Naive thymus-derived CD4-positive, alpha-beta T cell (primary cell): ENCODE measurements at regions of chr11 and their contacts with region 1.

Region 1: GRCh38 chr11:83292709-83293456 is 6.7 kb upstream of the CCDC90B start:
- DNase-seq: peak in 6 of 9 donors; percentile 23 to 41 (median 31)
- ATAC-seq: peak; percentile 85
- H3K4me3 ChIP-seq: no peak overlapping the region
- H3K4me3 Mint-ChIP-seq: peak overlapping the region in 8 of 10 donors; percentile 24 to 80 (median 63)
- H3K27ac ChIP-seq: no peak overlapping the region
- H3K27ac Mint-ChIP-seq: no peak overlapping the region
- H3K4me1 ChIP-seq: no peaks in the 10 kb centered on the region
- H3K4me1 Mint-ChIP-seq: peaks cover 2 to 6% (median 4%) of the 10 kb centered on the region in 7 donors
- H3K27me3 ChIP-seq: no peaks in the 10 kb centered on the region
- H3K27me3 Mint-ChIP-seq: peaks cover 0 to 29% (median 4%) of the 10 kb centered on the region in 5 donors

Region 2: DNA sequence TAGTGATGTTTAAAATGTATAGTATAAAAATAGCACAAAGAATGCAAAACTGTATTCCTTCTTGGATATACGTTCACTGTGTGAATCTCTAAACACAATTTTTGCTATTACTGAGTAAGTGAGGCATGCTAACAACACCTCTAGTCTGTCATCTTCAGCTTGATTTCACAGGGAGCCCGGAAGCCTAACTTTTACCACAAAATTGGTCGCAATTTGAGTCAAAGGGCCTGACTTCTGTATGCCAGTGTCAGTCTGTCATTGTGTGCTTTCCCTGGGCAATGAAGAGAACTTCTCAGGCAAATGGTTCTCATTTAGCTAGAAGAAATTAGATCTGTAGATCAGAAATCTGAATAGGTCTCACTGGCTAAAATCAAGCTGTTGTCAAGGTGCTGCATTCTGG is 1618.7 kb before region 1 on chr11:
- CTCF ChIA-PET with region 1: no interaction called
- POLR2A ChIA-PET with region 1: no interaction called
- intact Hi-C with region 1: no loop called
- DNase-seq: no peak
- ATAC-seq: no peak
- H3K4me3 ChIP-seq: no peak overlapping the region
- H3K4me3 Mint-ChIP-seq: no peak overlapping the region
- H3K27ac ChIP-seq: no peak overlapping the region
- H3K27ac Mint-ChIP-seq: no peak overlapping the region
- H3K4me1 ChIP-seq: no peaks in the 10 kb centered on the region
- H3K4me1 Mint-ChIP-seq: peaks cover 0 to 2% (median 0%) of the 10 kb centered on the region in 7 donors
- H3K27me3 ChIP-seq: no peaks in the 10 kb centered on the region
- H3K27me3 Mint-ChIP-seq: peaks cover 0 to 3% (median 0%) of the 10 kb centered on the region in 5 donors

Region 3: GRCh38 chr11:83162377-83162776 is 130.5 kb before region 1 on chr11:
- CTCF ChIA-PET with region 1: no interaction called
- POLR2A ChIA-PET with region 1: no interaction called
- intact Hi-C with region 1: no loop called
- DNase-seq: peak in 4 of 9 donors; percentile 20 to 43 (median 38)
- ATAC-seq: peak; percentile 47
- H3K4me3 ChIP-seq: peak overlapping the region; percentile 10
- H3K4me3 Mint-ChIP-seq: peak overlapping the region in 9 of 10 donors; percentile 35 to 100 (median 96)
- H3K27ac ChIP-seq: peak overlapping the region; percentile 98
- H3K27ac Mint-ChIP-seq: peak overlapping the region in 7 of 9 donors; percentile 28 to 100 (median 99)
- H3K4me1 ChIP-seq: peaks cover 14 to 34% of the 10 kb centered on the region in 2 donors
- H3K4me1 Mint-ChIP-seq: peaks cover 36 to 82% (median 75%) of the 10 kb centered on the region in 7 donors
- H3K27me3 ChIP-seq: no peaks in the 10 kb centered on the region
- H3K27me3 Mint-ChIP-seq: no peaks in the 10 kb centered on the region

Region 4: GRCh38 chr11:83427501-83427900 is 134.6 kb after region 1 on chr11:
- CTCF ChIA-PET with region 1: no interaction called
- POLR2A ChIA-PET with region 1: no interaction called
- intact Hi-C with region 1: no loop called
- DNase-seq: no peak
- ATAC-seq: no peak
- H3K4me3 ChIP-seq: no peak overlapping the region
- H3K4me3 Mint-ChIP-seq: no peak overlapping the region
- H3K27ac ChIP-seq: no peak overlapping the region
- H3K27ac Mint-ChIP-seq: no peak overlapping the region
- H3K4me1 ChIP-seq: no peaks in the 10 kb centered on the region
- H3K4me1 Mint-ChIP-seq: no peaks in the 10 kb centered on the region
- H3K27me3 ChIP-seq: no peaks in the 10 kb centered on the region
- H3K27me3 Mint-ChIP-seq: no peaks in the 10 kb centered on the region

Region 5: DNA sequence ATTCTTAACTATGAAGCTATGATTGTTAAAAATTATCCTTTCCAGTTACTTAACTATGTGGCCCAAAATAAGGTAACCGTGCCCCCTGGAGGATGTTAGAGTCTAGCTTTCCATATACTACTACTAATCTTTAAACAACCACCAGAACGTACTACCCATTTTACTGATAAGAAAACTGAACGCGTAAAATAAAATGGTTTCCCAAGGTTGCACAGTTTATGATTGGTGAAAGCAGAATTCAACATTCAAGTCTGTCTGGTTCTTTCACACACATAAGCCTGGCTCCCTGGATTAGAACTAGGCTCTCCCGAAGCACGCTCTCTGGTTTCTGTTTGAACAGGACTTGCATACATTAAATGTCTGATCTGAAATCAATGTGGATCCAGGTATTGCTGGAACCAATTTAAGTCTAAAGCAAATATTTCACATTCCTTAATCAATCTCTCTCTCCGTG is 431.2 kb after region 1 on chr11:
- CTCF ChIA-PET with region 1: no interaction called
- POLR2A ChIA-PET with region 1: no interaction called
- intact Hi-C with region 1: loop called in 1 of 2 experiments (anchors 1 kb)
- DNase-seq: peak in 3 of 9 donors; percentile 1 to 8 (median 8)
- ATAC-seq: peak; percentile 20
- H3K4me3 ChIP-seq: no peak overlapping the region
- H3K4me3 Mint-ChIP-seq: peak overlapping the region; percentile 22 to 91 (median 56)
- H3K27ac ChIP-seq: no peak overlapping the region
- H3K27ac Mint-ChIP-seq: peak overlapping the region in 1 of 9 donors; percentile 5
- H3K4me1 ChIP-seq: no peaks in the 10 kb centered on the region
- H3K4me1 Mint-ChIP-seq: peaks cover 0 to 12% (median 7%) of the 10 kb centered on the region in 7 donors
- H3K27me3 ChIP-seq: no peaks in the 10 kb centered on the region
- H3K27me3 Mint-ChIP-seq: peaks cover 5 to 35% (median 12%) of the 10 kb centered on the region in 5 donors